PC-3 (cell line): ENCODE measurements at regions of chr7 and their contacts with region 1.

Region 1: GRCh38 chr7:124171068-124171467 is 138.2 kb upstream of the TMEM229A start:
- DNase-seq: peak; percentile 66
- ATAC-seq: peak; percentile 84
- H3K4me3 ChIP-seq: no peak overlapping the region
- H3K27ac ChIP-seq: no peak overlapping the region
- H3K4me1 ChIP-seq: peaks cover 3% of the 10 kb centered on the region
- H3K27me3 ChIP-seq: no peaks in the 10 kb centered on the region
- CTCF ChIP-seq: peak; percentile 80

Region 2: GRCh38 chr7:124263232-124263827 is 92.3 kb after region 1 on chr7:
- CTCF ChIA-PET with region 1: no interaction called
- POLR2A ChIA-PET with region 1: no interaction called
- intact Hi-C with region 1: no loop called
- DNase-seq: no peak
- ATAC-seq: peak; percentile 45; the same call in 1 of the 2 replicates
- H3K4me3 ChIP-seq: no peak overlapping the region
- H3K27ac ChIP-seq: no peak overlapping the region
- H3K4me1 ChIP-seq: no peaks in the 10 kb centered on the region
- H3K27me3 ChIP-seq: no peaks in the 10 kb centered on the region
- CTCF ChIP-seq: no peak

Region 3: GRCh38 chr7:124338861-124339260 is 167.8 kb after region 1 on chr7:
- CTCF ChIA-PET with region 1: no interaction called
- POLR2A ChIA-PET with region 1: interaction called, 4 read pairs
- intact Hi-C with region 1: loop called (anchors 1 kb)
- DNase-seq: peak; percentile 73
- ATAC-seq: peak; percentile 96
- H3K4me3 ChIP-seq: no peak overlapping the region
- H3K27ac ChIP-seq: peak overlapping the region; percentile 72
- H3K4me1 ChIP-seq: peaks cover 16% of the 10 kb centered on the region
- H3K27me3 ChIP-seq: no peaks in the 10 kb centered on the region
- CTCF ChIP-seq: no peak

Region 4: DNA sequence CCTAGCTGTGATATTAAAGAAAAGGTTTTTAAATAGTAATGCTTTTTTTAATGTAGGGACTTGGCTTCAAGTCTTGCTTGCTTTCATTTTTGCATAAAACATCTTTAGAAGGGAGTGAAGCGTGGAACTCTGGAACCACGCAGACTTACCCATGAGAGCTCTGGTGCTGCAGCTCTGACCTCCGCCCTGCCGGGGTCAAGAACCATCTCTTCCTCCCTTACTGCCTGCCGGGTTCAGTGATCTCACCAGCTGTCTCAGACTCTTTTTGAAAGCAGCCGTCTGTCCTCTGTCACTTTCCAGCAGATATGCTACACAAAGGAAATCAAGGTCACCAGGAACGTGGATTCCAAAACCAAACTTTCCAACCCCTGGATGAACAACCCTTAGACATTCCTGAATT is 240.7 kb after region 1 on chr7:
- CTCF ChIA-PET with region 1: no interaction called
- POLR2A ChIA-PET with region 1: no interaction called
- intact Hi-C with region 1: no loop called
- DNase-seq: no peak
- ATAC-seq: no peak
- H3K4me3 ChIP-seq: no peak overlapping the region
- H3K27ac ChIP-seq: no peak overlapping the region
- H3K4me1 ChIP-seq: peaks cover 8% of the 10 kb centered on the region; the same call in 1 of the 2 replicates
- H3K27me3 ChIP-seq: no peaks in the 10 kb centered on the region
- CTCF ChIP-seq: no peak

Region 5: GRCh38 chr7:124667312-124668153 is 496.5 kb after region 1 on chr7:
- CTCF ChIA-PET with region 1: no interaction called
- POLR2A ChIA-PET with region 1: no interaction called
- intact Hi-C with region 1: loop called (anchors 5 kb)
- DNase-seq: peak; percentile 40
- ATAC-seq: peak; percentile 87
- H3K4me3 ChIP-seq: no peak overlapping the region
- H3K27ac ChIP-seq: no peak overlapping the region
- H3K4me1 ChIP-seq: peaks cover 13% of the 10 kb centered on the region
- H3K27me3 ChIP-seq: no peaks in the 10 kb centered on the region
- CTCF ChIP-seq: no peak

Region 6: GRCh38 chr7:124765401-124766352 is 594.6 kb after region 1 on chr7 and contains the start of gene GPR37:
- CTCF ChIA-PET with region 1: interaction called, 9 read pairs
- POLR2A ChIA-PET with region 1: no interaction called
- intact Hi-C with region 1: loop called (anchors 1 kb)
- DNase-seq: peak; percentile 86
- ATAC-seq: peak; percentile 88
- H3K4me3 ChIP-seq: peak within 1 kb of the TSS; percentile 92
- H3K27ac ChIP-seq: peak within 1 kb of the TSS; percentile 75
- H3K4me1 ChIP-seq: peaks cover 22% of the 10 kb centered on the region; the same call in 1 of the 2 replicates
- H3K27me3 ChIP-seq: no peaks in the 10 kb centered on the region
- CTCF ChIP-seq: peak; percentile 42
- total RNA-seq, gene GPR37: 10.5 and 14.3 TPM in 2 replicates

Region 7: DNA sequence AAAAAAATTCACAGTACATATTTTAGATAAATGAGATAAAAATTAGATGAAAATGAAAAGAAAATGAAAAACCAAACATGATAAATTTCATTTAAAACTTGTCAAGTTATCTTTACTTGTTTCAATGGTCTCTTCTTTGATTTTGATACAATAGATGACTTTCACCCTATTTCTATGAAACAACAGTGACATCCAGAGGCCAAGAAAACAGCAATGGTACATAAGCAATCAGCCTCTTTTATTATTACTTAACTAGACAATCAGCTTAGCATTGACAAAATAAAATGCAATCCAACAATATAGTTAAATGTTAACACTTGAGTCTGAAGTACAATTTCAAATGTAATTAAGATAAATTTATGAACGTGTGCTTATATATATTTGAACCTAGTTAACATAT is 669.4 kb after region 1 on chr7:
- CTCF ChIA-PET with region 1: no interaction called
- POLR2A ChIA-PET with region 1: no interaction called
- intact Hi-C with region 1: loop called (anchors 5 kb)
- DNase-seq: peak; percentile 47
- ATAC-seq: peak; percentile 54
- H3K4me3 ChIP-seq: no peak overlapping the region
- H3K27ac ChIP-seq: no peak overlapping the region
- H3K4me1 ChIP-seq: no peaks in the 10 kb centered on the region
- H3K27me3 ChIP-seq: no peaks in the 10 kb centered on the region
- CTCF ChIP-seq: peak; percentile 72